Left ventricle myocardium superior (tissue), 1 donor: ENCODE measurements at regions of chr5 and their contacts with region 1.

Region 1: DNA sequence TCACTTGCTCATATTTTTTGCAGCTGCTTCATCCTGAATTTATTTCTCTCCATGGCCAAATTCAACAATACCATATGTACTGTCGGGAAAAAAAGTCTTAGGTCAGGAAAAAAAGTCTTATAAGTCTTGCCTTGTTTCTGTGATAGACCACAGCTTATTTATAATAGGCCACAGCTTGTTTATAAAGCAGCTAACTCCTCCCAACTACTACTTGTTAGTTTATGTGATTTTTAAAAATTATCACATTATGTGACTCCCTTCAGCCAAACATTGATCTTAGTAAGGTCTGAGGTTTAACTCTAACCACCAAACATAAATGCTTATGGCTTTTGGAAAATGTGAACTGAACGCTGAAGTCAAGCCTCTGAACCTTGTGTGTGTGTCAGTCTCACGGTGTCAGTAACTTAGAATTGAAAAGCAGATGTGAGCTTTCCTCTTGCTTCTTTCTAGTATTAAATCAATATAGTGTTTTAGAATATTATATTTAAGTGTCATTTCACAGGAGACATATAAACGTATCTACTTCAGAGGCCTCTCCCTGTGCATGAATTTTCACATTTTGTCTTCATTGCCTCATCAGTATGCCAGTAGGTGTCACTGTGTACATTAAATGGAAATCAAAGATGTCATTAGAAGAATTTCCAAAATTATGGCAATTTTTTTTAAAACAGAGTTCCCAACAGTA is 51.3 kb downstream of the SNX24 start:
- DNase-seq: no peak
- ATAC-seq: no peak

Region 2: DNA sequence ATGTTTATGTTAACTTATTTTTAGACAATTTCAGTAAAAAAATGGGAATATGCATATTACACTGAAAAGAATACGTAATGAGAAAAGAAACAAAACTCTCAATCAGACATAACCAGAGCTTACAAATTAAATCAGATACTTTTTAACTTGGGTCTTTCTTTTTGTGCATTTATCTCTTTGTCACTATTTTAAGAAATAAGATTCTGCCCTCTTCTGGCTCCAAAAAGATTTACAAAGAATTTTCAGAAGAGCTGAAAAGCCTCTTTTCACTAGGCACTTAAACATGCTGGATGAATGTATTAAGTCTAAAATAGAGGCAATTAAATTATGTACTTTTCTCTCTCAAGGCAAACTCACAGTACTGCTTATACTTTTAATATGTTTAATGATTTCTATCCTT is 471.0 kb after region 1 on chr5:
- intact Hi-C with region 1: loop called (anchors 10 kb)
- DNase-seq: no peak
- ATAC-seq: no peak